Activated CD4-positive, alpha-beta memory T cell treated with anti-CD3 and anti-CD28 coated beads for 36 hours (primary cell): ENCODE measurements at regions of chr2 and their contacts with region 1.

Region 1: GRCh38 chr2:226835796-226836547 is at the start of gene RHBDD1:
- DNase-seq: peak; percentile 96
- H3K4me3 Mint-ChIP-seq: peak within 1 kb of the TSS; percentile 92
- H3K27ac Mint-ChIP-seq: peak within 1 kb of the TSS; percentile 99
- H3K4me1 Mint-ChIP-seq: peaks cover 56% of the 10 kb centered on the region
- H3K27me3 Mint-ChIP-seq: no peaks in the 10 kb centered on the region
- total RNA-seq, gene RHBDD1: 38.0 to 41.1 TPM

Region 2: GRCh38 chr2:226649871-226650660 is 185.9 kb before region 1 on chr2:
- CTCF ChIA-PET with region 1: no interaction called
- POLR2A ChIA-PET with region 1: no interaction called
- intact Hi-C with region 1: loop called (anchors 1 kb)
- DNase-seq: peak; percentile 66
- H3K4me3 Mint-ChIP-seq: no peak overlapping the region
- H3K27ac Mint-ChIP-seq: peak overlapping the region; percentile 39
- H3K4me1 Mint-ChIP-seq: peaks cover 29% of the 10 kb centered on the region
- H3K27me3 Mint-ChIP-seq: no peaks in the 10 kb centered on the region

Region 3: GRCh38 chr2:226707499-226707898 is 128.5 kb before region 1 on chr2:
- CTCF ChIA-PET with region 1: no interaction called
- POLR2A ChIA-PET with region 1: no interaction called
- intact Hi-C with region 1: no loop called
- DNase-seq: no peak
- H3K4me3 Mint-ChIP-seq: no peak overlapping the region
- H3K27ac Mint-ChIP-seq: no peak overlapping the region
- H3K4me1 Mint-ChIP-seq: no peaks in the 10 kb centered on the region
- H3K27me3 Mint-ChIP-seq: no peaks in the 10 kb centered on the region

Region 4: DNA sequence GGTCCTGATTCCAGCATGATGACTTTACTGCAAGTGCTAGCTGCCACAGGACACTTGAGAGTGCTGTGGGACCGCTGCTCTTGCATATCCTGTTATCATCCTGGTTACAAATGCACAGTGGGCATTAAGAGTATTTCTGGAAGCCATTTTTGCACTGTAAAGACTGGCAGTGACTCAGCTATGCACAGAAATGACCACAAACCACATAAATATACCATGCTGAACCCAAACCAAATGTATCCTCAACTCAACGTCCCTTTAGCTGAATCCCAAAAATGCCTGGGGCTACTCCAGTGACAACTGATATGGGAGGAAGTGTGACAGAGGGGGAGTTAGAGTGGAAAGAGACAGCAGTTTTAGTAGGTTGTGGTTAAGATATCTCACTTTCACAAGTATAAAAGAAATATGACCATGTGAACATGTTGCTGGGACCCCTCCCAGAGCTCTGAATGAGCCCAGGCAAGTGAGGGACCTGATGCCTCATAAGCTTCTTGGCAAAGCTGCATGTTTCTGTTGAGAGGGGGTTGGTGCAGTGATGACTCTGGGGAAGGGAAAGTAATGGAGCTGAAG is 37.2 kb after region 1 on chr2:
- CTCF ChIA-PET with region 1: no interaction called
- POLR2A ChIA-PET with region 1: interaction called, 16 read pairs
- intact Hi-C with region 1: loop called (anchors 1 kb)
- DNase-seq: peak; percentile 24
- H3K4me3 Mint-ChIP-seq: no peak overlapping the region
- H3K27ac Mint-ChIP-seq: peak overlapping the region; percentile 77
- H3K4me1 Mint-ChIP-seq: peaks cover 24% of the 10 kb centered on the region
- H3K27me3 Mint-ChIP-seq: no peaks in the 10 kb centered on the region

Region 5: GRCh38 chr2:227324995-227325838 is 489.2 kb after region 1 on chr2 and contains the start of gene MFF:
- CTCF ChIA-PET with region 1: no interaction called
- POLR2A ChIA-PET with region 1: no interaction called
- intact Hi-C with region 1: loop called (anchors 2 kb)
- DNase-seq: peak; percentile 97
- H3K4me3 Mint-ChIP-seq: peak within 1 kb of the TSS; percentile 90
- H3K27ac Mint-ChIP-seq: peak within 1 kb of the TSS; percentile 89
- H3K4me1 Mint-ChIP-seq: peaks cover 32% of the 10 kb centered on the region
- H3K27me3 Mint-ChIP-seq: no peaks in the 10 kb centered on the region
- total RNA-seq, gene MFF: 73.2 to 74.1 TPM

Region 6: GRCh38 chr2:227783404-227784138 is 947.6 kb after region 1 on chr2:
- CTCF ChIA-PET with region 1: no interaction called
- POLR2A ChIA-PET with region 1: no interaction called
- intact Hi-C with region 1: loop called (anchors 10 kb)
- DNase-seq: peak; percentile 18
- H3K4me3 Mint-ChIP-seq: peak overlapping the region; percentile 66
- H3K27ac Mint-ChIP-seq: peak overlapping the region; percentile 77
- H3K4me1 Mint-ChIP-seq: peaks cover 19% of the 10 kb centered on the region
- H3K27me3 Mint-ChIP-seq: peaks cover 5% of the 10 kb centered on the region